Esophagus muscularis mucosa (tissue), 4 donors: ENCODE measurements at regions of chr21 and their contacts with region 1.

Region 1: DNA sequence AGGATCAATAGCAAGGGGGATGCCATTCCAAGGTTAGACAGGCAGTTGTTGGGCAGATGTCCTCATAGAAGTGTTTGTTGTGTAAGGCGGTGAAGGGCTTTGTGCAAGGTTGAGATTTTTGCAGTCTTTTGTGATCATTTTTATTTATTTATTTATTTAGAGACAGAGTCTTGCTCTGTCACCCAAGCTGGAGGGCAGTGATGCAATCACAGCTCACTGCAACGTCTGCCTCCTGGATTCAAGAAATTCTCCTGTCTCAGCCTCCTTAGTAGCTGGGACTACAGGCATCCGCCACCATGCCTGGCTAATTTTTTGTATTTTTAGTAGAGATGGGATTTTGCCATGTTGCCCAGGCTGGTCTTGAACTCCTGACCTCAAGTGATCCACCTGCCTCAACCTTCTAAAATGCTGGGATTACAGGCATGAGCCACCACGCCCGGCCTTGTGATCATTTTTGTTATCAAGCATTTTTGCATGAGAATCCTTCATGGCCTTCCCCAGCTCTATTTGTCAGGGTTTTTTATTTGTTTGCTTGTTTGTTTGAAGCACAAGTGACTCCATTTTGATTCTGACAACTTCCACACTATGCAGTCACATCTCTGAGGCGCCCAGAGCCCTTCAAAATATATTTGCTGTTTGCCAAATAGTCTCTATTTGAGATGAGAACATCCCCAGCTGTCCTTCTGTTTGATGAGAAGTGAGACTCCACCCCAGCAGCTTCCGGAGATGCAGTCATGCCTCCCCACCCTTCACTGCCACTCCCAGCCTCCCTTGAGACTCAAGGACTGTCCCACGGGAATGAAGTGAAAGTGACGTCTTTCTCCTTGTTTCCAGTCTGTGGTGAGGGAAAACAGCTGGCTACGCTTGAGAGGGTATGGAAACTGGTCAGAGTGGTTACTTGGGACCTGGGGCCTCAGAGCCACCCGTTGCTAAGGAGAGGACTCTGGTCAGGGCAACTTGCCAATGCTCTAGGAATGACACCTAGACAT is 38.0 kb downstream of the TMEM50B start:
- DNase-seq: no peak
- H3K4me3 ChIP-seq: no peak overlapping the region
- H3K27ac ChIP-seq: peak overlapping the region; percentile 45 to 62 (median 50)
- H3K4me1 ChIP-seq: peaks cover 11 to 25% (median 18%) of the 10 kb centered on the region in 4 donors
- H3K27me3 ChIP-seq: no peaks in the 10 kb centered on the region
- CTCF ChIP-seq: no peak
- EP300 ChIP-seq: no peak
- POLR2A ChIP-seq: no peak

Region 2: DNA sequence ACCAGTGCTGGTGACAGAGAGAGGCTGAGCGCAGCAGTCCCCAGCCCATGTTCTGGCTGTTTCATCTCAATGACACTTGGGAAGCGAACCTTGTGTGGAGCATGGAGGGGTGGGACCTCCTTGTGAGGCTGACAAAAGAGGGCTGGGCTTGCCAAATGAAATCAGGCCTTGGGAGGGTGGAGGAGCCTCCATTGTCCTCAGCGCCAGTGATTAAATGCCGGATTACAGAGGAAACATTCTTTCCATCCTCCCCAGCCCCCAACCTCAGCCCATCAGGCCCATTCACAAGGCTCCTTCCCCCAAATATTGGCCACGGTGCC is 606.9 kb before region 1 on chr21:
- intact Hi-C with region 1: loop called (anchors 10 kb)
- DNase-seq: peak; percentile 86
- H3K4me3 ChIP-seq: no peak overlapping the region
- H3K27ac ChIP-seq: no peak overlapping the region
- H3K4me1 ChIP-seq: peaks cover 0 to 3% (median 0%) of the 10 kb centered on the region in 4 donors
- H3K27me3 ChIP-seq: peaks cover 0 to under 1% (median 0%) of the 10 kb centered on the region in 4 donors
- CTCF ChIP-seq: no peak
- EP300 ChIP-seq: no peak
- POLR2A ChIP-seq: no peak

Region 3: GRCh38 chr21:33403779-33404585 is 37.8 kb before region 1 on chr21:
- intact Hi-C with region 1: loop called (anchors 2 kb)
- DNase-seq: peak; percentile 92
- H3K4me3 ChIP-seq: peak overlapping the region; percentile 83 to 94 (median 92)
- H3K27ac ChIP-seq: peak overlapping the region; percentile 91 to 98 (median 94)
- H3K4me1 ChIP-seq: peaks cover 24 to 52% (median 44%) of the 10 kb centered on the region in 4 donors
- H3K27me3 ChIP-seq: no peaks in the 10 kb centered on the region
- CTCF ChIP-seq: peak in 1 of 3 experiments; percentile 10
- EP300 ChIP-seq: no peak
- POLR2A ChIP-seq: no peak